Panc1 (cell line): ENCODE measurements at regions of chr2 and their contacts with region 1.

Region 1: GRCh38 chr2:210002158-210003157 is at the start of gene RPE:
- DNase-seq: peak; percentile 60
- ATAC-seq: peak; percentile 100
- H3K4me3 ChIP-seq: peak within 1 kb of the TSS; percentile 79 to 85
- H3K27ac ChIP-seq: peak within 1 kb of the TSS; percentile 98
- H3K4me1 ChIP-seq: peaks cover 23% of the 10 kb centered on the region
- H3K27me3 ChIP-seq: no peaks in the 10 kb centered on the region
- CTCF ChIP-seq: no peak
- total RNA-seq, gene RPE: 100 TPM

Region 2: GRCh38 chr2:210099940-210100339 is 97.5 kb after region 1 on chr2:
- CTCF ChIA-PET with region 1: no interaction called
- POLR2A ChIA-PET with region 1: no interaction called
- in situ Hi-C with region 1: no loop called
- intact Hi-C with region 1: no loop called
- DNase-seq: no peak
- ATAC-seq: no peak
- H3K4me3 ChIP-seq: no peak overlapping the region
- H3K27ac ChIP-seq: no peak overlapping the region
- H3K4me1 ChIP-seq: no peaks in the 10 kb centered on the region
- H3K27me3 ChIP-seq: no peaks in the 10 kb centered on the region
- CTCF ChIP-seq: no peak

Region 3: GRCh38 chr2:210157546-210157945 is 155.1 kb after region 1 on chr2:
- CTCF ChIA-PET with region 1: no interaction called
- POLR2A ChIA-PET with region 1: interaction called, 12 read pairs
- in situ Hi-C with region 1: no loop called
- intact Hi-C with region 1: no loop called
- DNase-seq: no peak
- ATAC-seq: no peak
- H3K4me3 ChIP-seq: no peak overlapping the region
- H3K27ac ChIP-seq: no peak overlapping the region
- H3K4me1 ChIP-seq: no peaks in the 10 kb centered on the region
- H3K27me3 ChIP-seq: no peaks in the 10 kb centered on the region
- CTCF ChIP-seq: no peak

Region 4: DNA sequence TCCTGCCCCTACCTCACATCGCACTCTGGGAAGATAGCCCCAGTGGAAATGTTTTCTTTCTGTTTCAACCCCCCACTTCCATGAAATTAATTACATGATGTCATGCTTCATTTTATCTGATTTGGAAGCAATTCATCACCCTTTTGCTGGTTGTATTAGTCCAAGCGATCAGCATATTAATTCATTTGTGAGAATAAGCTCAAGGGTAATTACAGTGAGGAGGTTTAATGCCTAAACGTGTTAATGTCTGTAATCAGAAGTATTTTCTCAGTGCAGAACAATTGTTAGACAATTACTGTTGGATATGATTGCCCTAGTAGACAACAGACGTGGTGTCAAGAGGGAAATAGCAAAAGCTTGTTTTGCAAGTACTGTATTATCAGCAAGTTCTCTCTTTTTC is 1300.2 kb after region 1 on chr2:
- CTCF ChIA-PET with region 1: no interaction called
- POLR2A ChIA-PET with region 1: no interaction called
- in situ Hi-C with region 1: no loop called
- intact Hi-C with region 1: no loop called
- DNase-seq: no peak
- ATAC-seq: no peak
- H3K4me3 ChIP-seq: no peak overlapping the region
- H3K27ac ChIP-seq: no peak overlapping the region
- H3K4me1 ChIP-seq: no peaks in the 10 kb centered on the region
- H3K27me3 ChIP-seq: no peaks in the 10 kb centered on the region
- CTCF ChIP-seq: no peak